GM12878 (cell line): ENCODE measurements at regions of chr10 and their contacts with region 1.

Region 1: DNA sequence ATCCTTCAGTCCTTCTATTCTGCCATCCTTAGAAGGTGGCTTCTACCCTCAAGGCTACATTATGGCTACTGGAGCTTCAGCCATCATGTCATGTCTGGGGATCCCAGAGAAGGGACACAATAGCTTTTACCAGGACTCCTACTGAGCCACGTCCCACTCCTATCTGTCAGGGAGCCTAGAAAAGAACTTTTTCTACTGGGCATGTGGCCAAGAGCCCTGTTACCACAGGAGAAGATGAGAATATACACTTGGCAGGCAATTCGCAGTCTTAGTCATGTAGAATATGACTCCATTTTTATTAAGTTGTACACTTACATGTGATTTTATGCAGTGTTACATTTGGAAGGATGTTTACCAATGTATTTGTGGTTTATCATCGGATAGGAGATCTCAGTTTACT is 64.6 kb upstream of the KCNMA1 start:
- DNase-seq: no peak
- ATAC-seq: peak; percentile 59
- H3K4me3 ChIP-seq: no peak overlapping the region
- H3K27ac ChIP-seq: peak overlapping the region; percentile 35; the same call in 1 of the 2 replicates
- H3K4me1 ChIP-seq: peaks cover 5% of the 10 kb centered on the region
- H3K27me3 ChIP-seq: no peaks in the 10 kb centered on the region
- CTCF ChIP-seq: no peak
- EP300 ChIP-seq: no peak
- POLR2A ChIP-seq: no peak
- RAD21 ChIP-seq: no peak

Region 2: DNA sequence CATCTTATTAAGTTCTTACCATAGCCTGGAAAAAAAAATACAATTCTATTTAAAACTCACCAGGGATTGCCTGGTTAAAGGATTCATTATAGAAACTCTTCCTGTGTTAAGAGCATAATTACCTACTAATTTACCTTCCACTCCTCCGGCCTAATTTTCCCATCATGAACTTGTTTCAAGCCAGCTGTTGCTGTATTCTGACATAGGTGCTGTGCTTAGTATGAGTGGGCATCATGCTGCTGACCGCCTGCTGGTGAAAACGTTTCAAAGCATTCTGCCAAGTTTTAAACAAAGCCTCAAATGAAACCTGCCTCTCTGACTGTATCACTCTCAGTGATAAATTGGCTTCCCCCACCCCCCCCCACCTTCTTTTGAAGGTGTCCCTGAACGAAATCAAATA is 16.7 kb before region 1 on chr10:
- CTCF ChIA-PET with region 1: interaction called, 12 read pairs
- POLR2A ChIA-PET with region 1: interaction called, 8 read pairs
- RAD21 ChIA-PET with region 1: interaction called, 9 read pairs
- SMC1A ChIA-PET with region 1: interaction called, 16 read pairs
- in situ Hi-C with region 1: no loop called
- intact Hi-C with region 1: loop called (anchors 2 kb)
- DNase-seq: no peak
- ATAC-seq: peak; percentile 81
- H3K4me3 ChIP-seq: no peak overlapping the region
- H3K27ac ChIP-seq: no peak overlapping the region
- H3K4me1 ChIP-seq: peaks cover 47% of the 10 kb centered on the region
- H3K27me3 ChIP-seq: no peaks in the 10 kb centered on the region
- CTCF ChIP-seq: peak in 1 of 3 experiments; percentile 15; a peak in 1 of 6 replicates
- EP300 ChIP-seq: no peak
- POLR2A ChIP-seq: no peak
- RAD21 ChIP-seq: no peak